Activated CD4-positive, alpha-beta T cell treated with anti-CD3 and anti-CD28 coated beads, Interleukin-2, amount 10 ng/mL, durations not matched to agents 7 days and 5 days (primary cell): ENCODE measurements at regions of chr22 and their contacts with region 1.

Region 1: GRCh38 chr22:30005213-30005857 is 74.9 kb upstream of the HORMAD2 start:
- DNase-seq: peak; percentile 64
- H3K4me3 Mint-ChIP-seq: no peak overlapping the region
- H3K27ac Mint-ChIP-seq: no peak overlapping the region
- H3K4me1 Mint-ChIP-seq: peaks cover 10% of the 10 kb centered on the region
- H3K27me3 Mint-ChIP-seq: no peaks in the 10 kb centered on the region

Region 2: DNA sequence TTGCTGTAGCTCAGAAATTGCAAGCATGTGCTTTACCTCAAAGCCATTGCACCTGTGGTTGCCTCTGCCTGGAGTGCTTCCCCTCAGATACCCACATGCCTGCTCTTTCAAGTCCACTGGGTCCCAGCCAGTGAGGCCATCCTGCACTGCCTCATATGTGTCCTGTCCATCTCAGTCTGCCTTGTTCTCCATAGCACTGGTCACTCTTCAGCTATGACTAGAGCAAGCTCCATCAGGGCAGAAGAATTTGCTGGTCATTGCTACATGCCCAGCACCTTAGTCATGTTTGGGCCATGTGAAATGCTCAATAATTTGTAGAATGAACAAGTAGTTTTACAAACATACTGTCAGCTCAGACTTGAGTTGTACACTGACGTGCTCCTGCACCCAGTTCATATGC is 10.5 kb after region 1 on chr22:
- CTCF ChIA-PET with region 1: interaction called, 24 read pairs
- POLR2A ChIA-PET with region 1: no interaction called
- DNase-seq: no peak
- H3K4me3 Mint-ChIP-seq: no peak overlapping the region
- H3K27ac Mint-ChIP-seq: no peak overlapping the region
- H3K4me1 Mint-ChIP-seq: no peaks in the 10 kb centered on the region
- H3K27me3 Mint-ChIP-seq: no peaks in the 10 kb centered on the region